AG04450 (cell line): ENCODE measurements at regions of chr3 and their contacts with region 1.

Region 1: GRCh38 chr3:119463171-119464169 is at the start of gene TMEM39A:
- DNase-seq: peak; percentile 96
- H3K4me3 ChIP-seq: peak within 1 kb of the TSS; percentile 98
- H3K27ac ChIP-seq: peak within 1 kb of the TSS; percentile 97
- H3K27me3 ChIP-seq: no peaks in the 10 kb centered on the region
- CTCF ChIP-seq: no peak
- polyA plus RNA-seq, gene TMEM39A: 34.3 TPM in 2 replicates

Region 2: DNA sequence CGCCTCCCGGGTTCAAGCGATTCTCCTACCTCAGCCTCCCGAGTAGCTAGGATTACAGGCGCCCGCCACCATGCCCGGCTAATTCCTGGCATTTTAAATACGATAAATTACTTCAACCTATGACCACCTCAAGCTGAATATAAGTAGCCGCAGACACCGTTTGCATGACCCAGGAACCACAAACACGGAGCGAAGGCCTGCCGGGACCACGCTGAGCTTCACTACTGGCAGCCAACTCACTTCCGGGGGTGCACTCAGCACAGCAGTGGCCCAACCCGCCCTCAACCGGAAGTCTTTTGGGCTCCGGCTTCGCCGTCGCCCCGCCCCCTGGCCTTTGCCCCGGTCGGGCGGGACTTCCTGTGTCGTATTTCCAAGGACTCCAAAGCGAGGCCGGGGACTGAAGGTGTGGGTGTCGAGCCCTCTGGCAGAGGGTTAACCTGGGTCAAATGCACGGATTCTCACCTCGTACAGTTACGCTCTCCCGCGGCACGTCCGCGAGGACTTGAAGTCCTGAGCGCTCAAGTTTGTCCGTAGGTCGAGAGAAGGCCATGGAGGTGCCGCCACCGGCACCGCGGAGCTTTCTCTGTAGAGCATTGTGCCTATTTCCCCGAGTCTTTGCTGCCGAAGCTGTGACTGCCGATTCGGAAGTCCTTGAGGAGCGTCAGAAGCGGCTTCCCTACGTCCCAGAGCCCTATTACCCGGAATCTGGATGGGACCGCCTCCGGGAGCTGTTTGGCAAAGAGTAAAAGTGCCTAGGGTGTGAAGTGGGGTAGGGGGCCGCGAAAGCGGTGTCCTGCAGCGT is 34.9 kb after region 1 on chr3 and contains the start of gene TIMMDC1:
- CTCF ChIA-PET with region 1: interaction called, 5 read pairs
- POLR2A ChIA-PET with region 1: interaction called, 23 read pairs
- DNase-seq: peak; percentile 86
- H3K4me3 ChIP-seq: peak within 1 kb of the TSS; percentile 90
- H3K27ac ChIP-seq: peak within 1 kb of the TSS; percentile 85
- H3K27me3 ChIP-seq: no peaks in the 10 kb centered on the region
- CTCF ChIP-seq: no peak
- polyA plus RNA-seq, gene TIMMDC1: 73.1 and 97.4 TPM in 2 replicates